ENCODE measurements at regions of chrX and their contacts with region 1.

Region 1: DNA sequence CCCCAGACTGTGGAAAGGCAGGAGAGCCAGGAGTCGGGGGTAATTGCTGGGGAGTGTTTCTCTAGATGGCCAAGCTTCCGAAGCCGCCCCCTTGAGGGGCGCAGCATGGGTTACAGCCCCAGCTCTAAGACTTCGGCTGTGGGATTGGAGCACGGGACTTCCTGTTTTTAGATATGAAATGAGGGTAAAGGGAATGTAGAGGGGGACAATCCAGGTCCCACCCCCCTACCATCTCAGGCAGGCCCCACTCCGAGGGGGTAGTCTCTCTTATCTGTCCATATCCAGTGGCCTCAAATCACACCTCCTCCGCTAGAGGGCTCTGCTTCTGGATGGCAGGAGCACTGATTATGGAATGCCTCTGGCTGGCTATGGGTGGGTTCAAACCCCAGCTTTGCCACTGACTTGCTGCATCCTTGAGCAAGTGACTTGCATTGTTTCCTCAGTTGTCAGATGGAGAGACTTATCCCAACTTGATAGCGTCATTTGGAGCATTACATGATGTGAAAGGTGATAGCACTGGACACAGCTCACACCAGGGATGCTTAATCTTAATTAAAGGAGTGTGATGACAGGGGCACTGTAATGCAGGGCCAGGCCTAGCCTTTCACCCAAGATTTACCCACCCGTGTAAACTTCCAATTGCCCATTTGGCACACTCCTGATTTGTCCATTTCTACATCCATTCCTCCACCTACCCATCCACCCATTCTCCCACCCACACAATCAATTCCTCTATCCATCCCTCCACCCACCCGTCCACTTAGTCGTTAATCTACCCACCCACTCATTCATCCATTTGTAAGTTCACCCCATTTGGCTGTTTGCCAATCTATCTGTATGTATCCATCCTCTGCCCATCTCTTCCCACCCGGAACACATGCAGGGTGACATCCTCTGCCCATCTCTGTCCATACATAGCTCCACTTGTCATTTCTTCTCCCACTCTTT is 850 bp upstream of the KCND1 start:
- DNase-seq: peak; percentile 40
- CTCF ChIP-seq: peak; percentile 51

Region 2: GRCh38 chrX:48957827-48958634 is 14.5 kb before region 1 on chrX:
- CTCF ChIA-PET with region 1: interaction called, 18 read pairs
- POLR2A ChIA-PET with region 1: no interaction called
- DNase-seq: peak; percentile 90
- CTCF ChIP-seq: no peak

Measured in GM10248 (cell line).